ENCODE measurements at regions of chrX and their contacts with region 1.

Region 1: DNA sequence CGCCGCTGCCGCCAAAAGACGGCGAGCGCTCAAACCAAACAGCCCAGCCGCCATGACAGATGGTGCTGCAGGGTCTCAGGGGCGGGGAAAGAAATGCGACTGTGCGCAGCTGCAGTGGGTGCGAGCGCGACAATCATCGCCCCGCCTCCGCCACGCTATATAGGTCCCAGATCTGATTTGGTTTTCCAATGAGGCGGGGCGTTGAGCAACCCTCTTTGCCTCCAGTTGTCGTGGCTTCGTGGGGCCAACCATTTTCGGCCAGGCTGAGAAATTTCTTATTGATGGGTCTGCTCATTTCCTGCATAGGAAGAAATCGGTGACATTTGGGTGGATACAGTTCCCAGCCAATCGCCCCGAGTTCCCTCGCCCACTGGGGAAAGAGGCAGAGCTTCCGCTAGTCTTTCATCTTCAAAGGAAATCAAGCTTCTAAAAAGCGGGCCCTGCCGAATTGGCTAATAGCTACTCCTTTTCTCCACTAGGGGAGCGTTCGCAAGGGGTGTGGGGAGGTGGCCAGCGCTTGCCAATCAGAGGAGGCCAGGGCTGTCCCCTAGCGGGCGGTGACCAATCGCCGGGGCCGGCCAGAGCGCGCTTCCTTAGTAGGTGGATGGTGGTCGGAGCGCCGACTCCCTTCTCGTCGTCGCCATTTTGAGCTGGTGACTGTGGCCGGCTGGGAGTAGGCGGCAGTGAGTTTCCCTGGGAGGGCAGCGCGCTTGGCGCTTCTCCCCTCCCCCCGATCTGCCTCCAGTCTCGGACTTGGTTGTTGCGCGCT is at the starts of genes NDUFB11 and RBM10:
- DNase-seq: peak; percentile 68 to 95 (median 86)
- ATAC-seq: peak; percentile 87 to 89
- H3K4me3 Mint-ChIP-seq: peak within 1 kb of the TSS; percentile 93 to 99 (median 96)
- H3K27ac Mint-ChIP-seq: peak within 1 kb of the TSS; percentile 94 to 98 (median 98)
- H3K4me1 Mint-ChIP-seq: peaks cover 16 to 39% (median 34%) of the 10 kb centered on the region in 4 donors
- H3K27me3 Mint-ChIP-seq: no peaks in the 10 kb centered on the region
- polyA plus RNA-seq, gene NDUFB11: 171 to 185 (median 175) TPM
- polyA plus RNA-seq, gene RBM10: 17.6 to 39.2 (median 27.9) TPM

Region 2: DNA sequence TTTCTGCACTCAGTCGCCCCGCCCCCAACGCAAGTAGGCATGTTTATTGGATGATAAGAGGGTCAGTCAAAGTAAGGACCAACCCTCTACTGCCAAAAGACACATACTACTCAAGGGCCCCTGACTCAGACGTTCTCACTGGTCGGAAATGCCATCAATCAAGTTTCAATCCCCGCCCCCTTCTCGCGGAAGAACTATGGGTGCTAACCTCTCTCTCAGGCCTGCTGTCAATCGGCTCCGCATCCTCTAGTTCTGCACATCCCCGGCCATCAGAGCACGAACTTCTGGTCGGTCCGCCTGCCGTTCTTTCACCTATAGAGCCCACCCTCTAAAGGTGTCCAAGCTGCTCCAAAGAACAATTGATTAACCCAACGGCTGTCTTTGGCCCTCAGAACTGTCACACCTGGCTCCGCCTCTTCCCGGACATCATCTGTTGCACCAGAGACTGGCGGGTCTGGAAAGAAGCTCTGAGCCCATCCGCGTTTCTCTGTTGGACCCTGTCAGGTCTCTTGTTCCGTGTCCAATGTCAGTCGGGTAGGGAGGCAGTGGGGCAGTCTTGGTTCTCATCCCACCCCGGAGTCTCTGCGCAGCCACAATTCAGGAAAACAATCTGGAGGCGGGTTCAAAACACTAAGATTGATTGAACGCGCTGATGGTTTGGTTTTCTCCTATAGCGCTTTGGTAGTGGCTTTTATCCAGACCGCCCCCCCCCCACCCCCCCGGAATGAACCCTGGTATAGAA is 15.5 kb before region 1 on chrX:
- POLR2A ChIA-PET with region 1: interaction called, 19 read pairs
- DNase-seq: peak; percentile 66 to 95 (median 90)
- ATAC-seq: peak; percentile 98
- H3K4me3 Mint-ChIP-seq: peak overlapping the region; percentile 92 to 99 (median 96)
- H3K27ac Mint-ChIP-seq: peak overlapping the region; percentile 90 to 98 (median 96)
- H3K4me1 Mint-ChIP-seq: peaks cover 0 to 12% (median 2%) of the 10 kb centered on the region in 4 donors
- H3K27me3 Mint-ChIP-seq: no peaks in the 10 kb centered on the region

Region 3: DNA sequence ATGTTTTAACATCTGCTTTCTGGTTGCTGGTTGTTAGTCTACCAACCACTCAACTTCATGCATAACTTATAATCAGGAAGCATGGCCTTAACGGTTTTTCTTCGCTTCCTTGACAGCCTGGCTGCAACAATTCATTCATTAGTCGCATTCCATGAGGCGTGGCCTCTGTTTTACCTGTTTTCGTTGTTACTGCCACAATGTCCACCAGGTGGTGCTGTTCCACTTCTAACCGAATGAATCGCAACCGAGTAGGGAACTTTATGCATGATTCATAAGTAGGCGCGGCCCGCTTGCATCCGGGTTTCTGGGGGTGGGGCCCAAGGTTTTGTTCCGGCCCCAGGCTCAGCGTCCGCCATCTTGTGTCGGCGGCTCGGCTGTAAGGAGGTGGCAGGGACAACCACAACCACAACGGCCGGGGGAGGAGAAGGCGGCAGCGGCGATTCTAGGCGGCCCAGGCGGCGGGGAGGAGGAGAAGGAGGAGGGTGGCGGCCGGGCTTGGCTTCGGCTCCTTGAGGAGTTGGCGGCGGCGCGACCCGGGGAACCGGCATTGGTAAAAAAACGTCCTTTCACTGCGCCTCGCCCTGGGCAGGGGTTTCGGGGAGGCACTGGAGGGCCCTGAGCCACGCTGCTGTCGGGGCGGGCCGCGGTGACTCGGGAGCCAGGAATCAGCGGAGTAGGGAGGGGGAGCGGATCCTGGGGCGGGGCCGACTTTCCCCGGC is 48.8 kb after region 1 on chrX and contains the start of gene UBA1:
- POLR2A ChIA-PET with region 1: interaction called, 21 read pairs
- DNase-seq: peak; percentile 75 to 97 (median 90)
- ATAC-seq: peak; percentile 78 to 79
- H3K4me3 Mint-ChIP-seq: peak within 1 kb of the TSS; percentile 92 to 100 (median 98)
- H3K27ac Mint-ChIP-seq: peak within 1 kb of the TSS; percentile 92 to 100 (median 100)
- H3K4me1 Mint-ChIP-seq: peaks cover 25 to 65% (median 52%) of the 10 kb centered on the region in 4 donors
- H3K27me3 Mint-ChIP-seq: no peaks in the 10 kb centered on the region
- polyA plus RNA-seq, gene UBA1: 156 to 176 (median 163) TPM